ENCODE measurements at regions of chr14 and their contacts with region 1.

Region 1: GRCh38 chr14:47278234-47278842 is 397.1 kb downstream of the MDGA2 start:
- DNase-seq: peak; percentile 57
- H3K4me3 Mint-ChIP-seq: no peak overlapping the region
- H3K27ac Mint-ChIP-seq: no peak overlapping the region
- H3K4me1 Mint-ChIP-seq: no peaks in the 10 kb centered on the region
- H3K27me3 Mint-ChIP-seq: no peaks in the 10 kb centered on the region

Region 2: GRCh38 chr14:46250113-46250703 is 1028.1 kb before region 1 on chr14:
- CTCF ChIA-PET with region 1: no interaction called
- intact Hi-C with region 1: loop called (anchors 10 kb)
- DNase-seq: no peak
- H3K4me3 Mint-ChIP-seq: no peak overlapping the region
- H3K27ac Mint-ChIP-seq: no peak overlapping the region
- H3K4me1 Mint-ChIP-seq: no peaks in the 10 kb centered on the region
- H3K27me3 Mint-ChIP-seq: no peaks in the 10 kb centered on the region

Region 3: GRCh38 chr14:46581036-46581671 is 697.2 kb before region 1 on chr14:
- CTCF ChIA-PET with region 1: no interaction called
- intact Hi-C with region 1: loop called (anchors 1 kb)
- DNase-seq: peak; percentile 21
- H3K4me3 Mint-ChIP-seq: no peak overlapping the region
- H3K27ac Mint-ChIP-seq: no peak overlapping the region
- H3K4me1 Mint-ChIP-seq: no peaks in the 10 kb centered on the region
- H3K27me3 Mint-ChIP-seq: no peaks in the 10 kb centered on the region

Region 4: GRCh38 chr14:47235619-47236018 is 42.7 kb before region 1 on chr14:
- CTCF ChIA-PET with region 1: no interaction called
- intact Hi-C with region 1: no loop called
- DNase-seq: no peak
- H3K4me3 Mint-ChIP-seq: no peak overlapping the region
- H3K27ac Mint-ChIP-seq: no peak overlapping the region
- H3K4me1 Mint-ChIP-seq: no peaks in the 10 kb centered on the region
- H3K27me3 Mint-ChIP-seq: no peaks in the 10 kb centered on the region

Region 5: DNA sequence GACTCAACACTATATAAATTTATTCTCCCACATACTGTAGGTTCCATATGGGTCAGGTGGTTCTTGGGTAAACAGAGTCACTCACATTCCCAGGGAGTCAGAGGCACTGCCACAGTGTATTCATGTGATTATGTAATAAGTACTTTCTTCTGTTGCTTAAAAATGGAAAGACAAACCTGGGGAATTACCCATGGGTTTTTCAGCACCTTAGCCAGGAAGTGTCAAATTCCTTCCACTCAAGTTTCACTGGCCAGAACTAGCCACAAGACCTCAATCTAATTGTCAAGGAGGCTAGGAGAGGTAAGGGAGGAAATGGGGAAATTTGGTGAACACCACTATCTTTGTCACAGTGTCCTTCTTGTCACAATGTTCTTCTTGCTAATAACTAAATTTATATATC is 730.3 kb after region 1 on chr14:
- CTCF ChIA-PET with region 1: no interaction called
- intact Hi-C with region 1: no loop called
- DNase-seq: no peak
- H3K4me3 Mint-ChIP-seq: no peak overlapping the region
- H3K27ac Mint-ChIP-seq: no peak overlapping the region
- H3K4me1 Mint-ChIP-seq: no peaks in the 10 kb centered on the region
- H3K27me3 Mint-ChIP-seq: no peaks in the 10 kb centered on the region

Measured in activated naive CD4-positive, alpha-beta T cell treated with anti-CD3 and anti-CD28 coated beads for 36 hours (primary cell).